B cell (primary cell): ENCODE measurements at regions of chr11 and their contacts with region 1.

Region 1: GRCh38 chr11:72722050-72722748 is 30.0 kb downstream of the ARAP1 start:
- DNase-seq: peak; percentile 93
- ATAC-seq: peak; percentile 85
- H3K4me3 ChIP-seq: peak overlapping the region; percentile 36 to 74 (median 50)
- H3K4me3 Mint-ChIP-seq: peak overlapping the region; percentile 95
- H3K27ac ChIP-seq: peak overlapping the region; percentile 65 to 81
- H3K27ac Mint-ChIP-seq: peak overlapping the region; percentile 94
- H3K4me1 ChIP-seq: peaks cover 55 to 77% of the 10 kb centered on the region in 2 donors
- H3K4me1 Mint-ChIP-seq: peaks cover 76% of the 10 kb centered on the region
- H3K27me3 ChIP-seq: no peaks in the 10 kb centered on the region
- H3K27me3 Mint-ChIP-seq: no peaks in the 10 kb centered on the region
- CTCF ChIP-seq: no peak

Region 2: GRCh38 chr11:72378704-72379384 is 343.4 kb before region 1 on chr11:
- CTCF ChIA-PET with region 1: no interaction called
- POLR2A ChIA-PET with region 1: no interaction called
- intact Hi-C with region 1: no loop called
- DNase-seq: no peak
- ATAC-seq: no peak
- H3K4me3 ChIP-seq: no peak overlapping the region
- H3K4me3 Mint-ChIP-seq: no peak overlapping the region
- H3K27ac ChIP-seq: no peak overlapping the region
- H3K27ac Mint-ChIP-seq: no peak overlapping the region
- H3K4me1 ChIP-seq: no peaks in the 10 kb centered on the region
- H3K4me1 Mint-ChIP-seq: no peaks in the 10 kb centered on the region
- H3K27me3 ChIP-seq: no peaks in the 10 kb centered on the region
- H3K27me3 Mint-ChIP-seq: no peaks in the 10 kb centered on the region
- CTCF ChIP-seq: no peak

Region 3: GRCh38 chr11:72736452-72737069 is 14.4 kb after region 1 on chr11:
- CTCF ChIA-PET with region 1: interaction called, 142 read pairs
- POLR2A ChIA-PET with region 1: interaction called, 12 read pairs
- intact Hi-C with region 1: loop called (anchors 1 kb)
- DNase-seq: peak; percentile 87
- ATAC-seq: peak; percentile 42
- H3K4me3 ChIP-seq: peak overlapping the region in 4 of 5 experiments; percentile 13 to 67 (median 42)
- H3K4me3 Mint-ChIP-seq: peak overlapping the region; percentile 86
- H3K27ac ChIP-seq: peak overlapping the region; percentile 97 to 99
- H3K27ac Mint-ChIP-seq: peak overlapping the region; percentile 99
- H3K4me1 ChIP-seq: peaks cover 76 to 87% of the 10 kb centered on the region in 2 donors
- H3K4me1 Mint-ChIP-seq: peaks cover 83% of the 10 kb centered on the region
- H3K27me3 ChIP-seq: no peaks in the 10 kb centered on the region
- H3K27me3 Mint-ChIP-seq: no peaks in the 10 kb centered on the region
- CTCF ChIP-seq: no peak

Region 4: DNA sequence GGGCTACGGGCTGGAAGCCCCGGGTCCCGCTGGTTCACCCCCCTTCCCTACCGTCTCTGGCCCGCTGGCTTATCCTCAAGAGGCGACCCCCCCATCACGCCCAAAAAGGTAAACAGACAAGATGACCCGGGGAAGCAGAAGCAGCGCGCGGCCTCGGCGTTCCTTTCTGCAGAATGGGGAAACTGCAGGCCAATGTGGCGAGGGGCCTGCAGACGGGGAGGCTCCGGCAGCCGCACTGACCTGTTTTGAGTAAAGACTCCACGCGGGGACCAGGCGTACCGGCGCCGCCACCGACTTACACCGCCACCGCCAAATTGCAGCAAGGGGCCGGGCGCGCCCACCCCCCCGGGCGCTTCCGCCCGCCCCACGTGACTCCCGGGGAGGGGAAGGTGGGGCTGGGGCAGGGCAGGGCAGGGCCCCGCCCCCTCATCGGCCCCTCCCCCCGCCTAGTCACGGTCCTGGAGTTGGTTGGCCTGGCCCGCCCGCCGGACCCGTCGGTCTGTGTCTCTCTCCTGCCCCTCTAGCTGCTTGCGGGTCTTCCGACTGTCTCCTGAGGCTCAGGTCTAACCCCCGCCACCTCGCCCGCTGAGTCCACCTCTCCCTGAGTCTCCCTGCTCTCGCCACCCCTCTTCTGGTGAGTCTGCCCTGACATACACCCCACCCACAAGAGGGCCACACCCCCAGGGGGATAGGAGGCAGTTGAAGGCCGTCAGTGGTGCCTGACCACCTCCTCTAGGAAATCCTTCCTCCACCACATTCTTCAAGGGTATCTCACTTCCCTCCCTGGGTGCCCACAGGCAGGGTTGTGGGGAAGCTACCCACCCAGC is 30.1 kb after region 1 on chr11 and contains the start of gene ARAP1:
- CTCF ChIA-PET with region 1: interaction called, 142 read pairs
- POLR2A ChIA-PET with region 1: interaction called, 6 read pairs
- intact Hi-C with region 1: loop called (anchors 1 kb)
- DNase-seq: peak; percentile 87
- ATAC-seq: peak; percentile 91
- H3K4me3 ChIP-seq: peak within 1 kb of the TSS; percentile 63 to 93 (median 82)
- H3K4me3 Mint-ChIP-seq: peak within 1 kb of the TSS; percentile 99
- H3K27ac ChIP-seq: peak within 1 kb of the TSS; percentile 65 to 79
- H3K27ac Mint-ChIP-seq: peak within 1 kb of the TSS; percentile 96
- H3K4me1 ChIP-seq: peaks cover 42 to 53% of the 10 kb centered on the region in 2 donors
- H3K4me1 Mint-ChIP-seq: peaks cover 45% of the 10 kb centered on the region
- H3K27me3 ChIP-seq: no peaks in the 10 kb centered on the region
- H3K27me3 Mint-ChIP-seq: no peaks in the 10 kb centered on the region
- CTCF ChIP-seq: peak; percentile 12
- total RNA-seq, gene ARAP1: 233 and 242 TPM in 2 replicates

Region 5: GRCh38 chr11:72814286-72815109 is 92.3 kb after region 1 on chr11 and contains the start of gene ATG16L2:
- CTCF ChIA-PET with region 1: interaction called, 46 read pairs
- POLR2A ChIA-PET with region 1: interaction called, 11 read pairs
- intact Hi-C with region 1: loop called (anchors 1 kb)
- DNase-seq: no peak
- ATAC-seq: peak; percentile 80
- H3K4me3 ChIP-seq: peak within 1 kb of the TSS; percentile 94 to 99 (median 98)
- H3K4me3 Mint-ChIP-seq: peak within 1 kb of the TSS; percentile 99
- H3K27ac ChIP-seq: peak within 1 kb of the TSS; percentile 95 to 98
- H3K27ac Mint-ChIP-seq: peak within 1 kb of the TSS; percentile 98
- H3K4me1 ChIP-seq: peaks cover 18 to 36% of the 10 kb centered on the region in 2 donors
- H3K4me1 Mint-ChIP-seq: peaks cover 45% of the 10 kb centered on the region
- H3K27me3 ChIP-seq: no peaks in the 10 kb centered on the region
- H3K27me3 Mint-ChIP-seq: no peaks in the 10 kb centered on the region
- CTCF ChIP-seq: peak; percentile 34
- total RNA-seq, gene ATG16L2: 212 and 228 TPM in 2 replicates

Region 6: GRCh38 chr11:72831513-72832300 is 109.5 kb after region 1 on chr11:
- CTCF ChIA-PET with region 1: interaction called, 51 read pairs
- POLR2A ChIA-PET with region 1: interaction called, 3 read pairs
- intact Hi-C with region 1: no loop called
- DNase-seq: peak; percentile 57
- ATAC-seq: peak; percentile 69
- H3K4me3 ChIP-seq: no peak overlapping the region
- H3K4me3 Mint-ChIP-seq: no peak overlapping the region
- H3K27ac ChIP-seq: peak overlapping the region; percentile 22 to 38
- H3K27ac Mint-ChIP-seq: peak overlapping the region; percentile 86
- H3K4me1 ChIP-seq: peaks cover 0 to 14% of the 10 kb centered on the region in 2 donors
- H3K4me1 Mint-ChIP-seq: peaks cover 24% of the 10 kb centered on the region
- H3K27me3 ChIP-seq: no peaks in the 10 kb centered on the region
- H3K27me3 Mint-ChIP-seq: no peaks in the 10 kb centered on the region
- CTCF ChIP-seq: peak; percentile 77